ENCODE measurements at regions of chr7 and their contacts with region 1.

Region 1: GRCh38 chr7:22854158-22855048 is 31.8 kb upstream of the TOMM7 start:
- DNase-seq: peak; percentile 95 to 97 (median 96)
- ATAC-seq: peak; percentile 93 to 94
- H3K4me3 ChIP-seq: peak overlapping the region; percentile 55
- H3K27ac ChIP-seq: peak overlapping the region; percentile 86
- H3K4me1 ChIP-seq: no peaks in the 10 kb centered on the region
- H3K27me3 ChIP-seq: no peaks in the 10 kb centered on the region

Region 2: DNA sequence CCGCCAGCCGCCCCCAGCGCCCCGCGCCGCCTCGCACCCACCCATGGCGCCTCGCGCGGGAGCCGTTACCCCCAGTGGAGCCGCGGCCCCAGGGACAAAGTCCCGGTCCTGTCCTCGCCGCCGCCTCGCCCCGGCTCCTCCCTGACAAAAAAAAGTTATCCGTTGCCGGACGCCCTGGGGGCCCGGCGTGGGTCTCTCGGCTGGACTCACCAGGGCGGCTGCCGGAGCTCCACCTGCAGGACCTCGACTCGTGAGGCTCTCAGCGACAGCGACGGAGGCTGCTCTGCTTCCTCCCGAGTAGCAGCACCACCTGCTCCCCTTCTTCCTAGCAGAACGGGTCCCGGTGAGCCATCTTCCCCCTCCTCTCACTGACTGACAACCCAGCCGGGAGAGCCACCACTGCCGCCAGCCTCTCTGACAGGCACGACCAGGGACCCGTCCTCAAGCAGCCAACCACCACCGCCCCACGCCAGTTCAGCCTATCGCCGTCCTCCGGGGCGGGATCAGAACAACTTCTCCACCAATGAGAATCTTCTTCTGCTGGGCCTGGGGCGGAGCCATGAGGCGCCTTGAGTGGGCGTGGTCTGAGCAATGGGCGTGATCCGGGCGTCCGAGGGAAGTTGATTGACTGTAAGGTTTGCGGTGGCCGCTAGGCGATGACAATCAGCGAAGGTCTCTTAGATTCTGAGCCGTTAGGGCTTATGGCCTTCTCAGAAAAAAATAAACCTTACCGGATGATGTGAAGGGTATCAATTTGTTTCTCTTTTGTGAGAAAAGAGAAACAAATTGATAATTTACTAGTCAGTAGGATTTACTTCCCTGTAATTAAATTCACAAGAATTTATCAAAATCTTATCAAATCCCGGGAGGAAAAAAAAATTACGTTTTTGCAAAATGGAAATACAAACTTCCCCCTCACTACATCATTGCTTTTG is 159.6 kb after region 1 on chr7 and contains the start of gene HYCC1:
- intact Hi-C with region 1: loop called in 1 of 4 experiments (anchors 10 kb)
- DNase-seq: peak; percentile 99
- ATAC-seq: peak; percentile 100
- H3K4me3 ChIP-seq: peak within 1 kb of the TSS; percentile 72
- H3K27ac ChIP-seq: peak within 1 kb of the TSS; percentile 36
- H3K4me1 ChIP-seq: no peaks in the 10 kb centered on the region
- H3K27me3 ChIP-seq: no peaks in the 10 kb centered on the region
- total RNA-seq, gene HYCC1: 32.8 to 47.3 (median 36.3) TPM